Activated CD8-positive, alpha-beta memory T cell treated with anti-CD3 and anti-CD28 coated beads, Interleukin-2, amount 10 ng/mL, durations not matched to agents 7 days and 5 days (primary cell): ENCODE measurements at regions of chr20 and their contacts with region 1.

Region 1: DNA sequence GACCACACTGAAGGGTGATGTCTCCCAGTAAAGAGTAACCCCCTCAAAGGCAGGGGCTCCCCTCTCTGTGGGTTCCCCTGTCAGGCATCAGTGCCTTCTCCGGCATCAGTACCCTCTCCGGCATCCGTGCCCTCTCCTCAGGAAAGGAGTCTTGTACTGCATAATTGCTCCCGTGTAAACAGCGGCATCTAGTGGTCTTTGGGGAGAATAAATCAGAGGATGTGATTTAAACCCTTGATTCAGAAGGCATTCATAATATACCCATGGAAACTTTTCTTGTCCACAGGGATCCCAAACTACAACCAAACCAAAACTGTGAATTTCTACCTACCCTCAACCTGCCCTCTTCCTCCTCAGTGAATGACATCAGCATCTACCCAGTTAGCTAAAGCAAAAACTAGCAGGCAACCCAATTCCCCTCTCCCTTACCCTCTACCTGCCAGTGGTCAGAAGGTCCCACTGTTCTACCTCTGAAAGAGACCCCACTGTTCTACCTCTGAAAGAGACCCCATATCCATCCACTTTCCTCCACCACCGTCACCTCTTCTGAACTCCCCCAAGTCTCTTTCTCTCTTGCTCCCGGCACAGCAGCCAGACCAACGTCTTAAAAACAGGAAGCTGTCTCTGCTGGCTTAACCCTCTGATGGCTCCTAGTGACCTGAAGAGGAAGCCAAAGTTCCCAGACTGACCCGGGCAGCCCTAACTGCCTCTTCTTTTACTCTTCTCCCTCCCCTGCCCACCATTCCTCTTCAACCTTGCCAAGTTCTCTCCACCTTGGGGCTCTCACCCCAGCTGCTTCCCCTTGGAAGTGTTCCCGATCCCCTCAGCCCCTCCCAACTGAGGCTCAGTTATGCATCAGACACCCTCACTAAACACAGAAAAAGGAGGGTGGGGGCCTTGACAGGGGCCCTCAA is 27.2 kb downstream of the UBE2V1 start:
- DNase-seq: peak; percentile 54
- ATAC-seq: peak; percentile 79
- H3K4me3 Mint-ChIP-seq: peak overlapping the region; percentile 11
- H3K27ac Mint-ChIP-seq: peak overlapping the region; percentile 81
- H3K4me1 Mint-ChIP-seq: peaks cover 26% of the 10 kb centered on the region
- H3K27me3 Mint-ChIP-seq: no peaks in the 10 kb centered on the region

Region 2: DNA sequence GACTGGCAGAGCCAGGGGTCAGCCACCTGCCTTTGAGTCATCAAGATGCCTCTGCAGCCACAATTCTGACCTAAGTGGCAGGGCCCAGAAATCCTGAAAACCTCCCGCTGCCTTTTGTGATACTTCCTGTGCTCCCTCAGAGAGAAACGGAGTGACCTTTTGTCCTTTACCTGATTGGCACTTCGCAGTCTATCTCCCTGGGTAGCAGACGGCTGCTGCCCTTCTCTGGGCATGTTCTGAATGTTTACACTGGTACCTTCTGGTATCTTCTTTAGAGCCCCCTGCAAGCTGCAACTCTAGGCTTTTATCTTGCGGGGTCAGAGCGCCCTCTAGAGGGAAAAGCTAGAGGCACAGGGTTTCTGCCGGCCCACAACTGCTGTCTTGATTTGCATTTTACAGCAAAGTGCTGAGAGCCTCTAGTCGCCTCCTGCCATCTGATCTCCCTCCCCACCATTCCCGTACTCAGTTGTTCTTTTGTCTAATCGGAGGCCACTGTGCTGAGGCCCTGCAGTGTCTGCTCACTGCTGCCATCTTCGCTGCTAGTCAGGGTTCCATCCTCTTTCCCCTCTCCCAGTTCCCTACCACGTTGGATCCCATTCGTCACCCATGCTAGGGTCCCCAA is 197.3 kb before region 1 on chr20:
- CTCF ChIA-PET with region 1: no interaction called
- DNase-seq: peak; percentile 73
- ATAC-seq: peak; percentile 48
- H3K4me3 Mint-ChIP-seq: no peak overlapping the region
- H3K27ac Mint-ChIP-seq: peak overlapping the region; percentile 29
- H3K4me1 Mint-ChIP-seq: peaks cover 40% of the 10 kb centered on the region
- H3K27me3 Mint-ChIP-seq: no peaks in the 10 kb centered on the region

Region 3: DNA sequence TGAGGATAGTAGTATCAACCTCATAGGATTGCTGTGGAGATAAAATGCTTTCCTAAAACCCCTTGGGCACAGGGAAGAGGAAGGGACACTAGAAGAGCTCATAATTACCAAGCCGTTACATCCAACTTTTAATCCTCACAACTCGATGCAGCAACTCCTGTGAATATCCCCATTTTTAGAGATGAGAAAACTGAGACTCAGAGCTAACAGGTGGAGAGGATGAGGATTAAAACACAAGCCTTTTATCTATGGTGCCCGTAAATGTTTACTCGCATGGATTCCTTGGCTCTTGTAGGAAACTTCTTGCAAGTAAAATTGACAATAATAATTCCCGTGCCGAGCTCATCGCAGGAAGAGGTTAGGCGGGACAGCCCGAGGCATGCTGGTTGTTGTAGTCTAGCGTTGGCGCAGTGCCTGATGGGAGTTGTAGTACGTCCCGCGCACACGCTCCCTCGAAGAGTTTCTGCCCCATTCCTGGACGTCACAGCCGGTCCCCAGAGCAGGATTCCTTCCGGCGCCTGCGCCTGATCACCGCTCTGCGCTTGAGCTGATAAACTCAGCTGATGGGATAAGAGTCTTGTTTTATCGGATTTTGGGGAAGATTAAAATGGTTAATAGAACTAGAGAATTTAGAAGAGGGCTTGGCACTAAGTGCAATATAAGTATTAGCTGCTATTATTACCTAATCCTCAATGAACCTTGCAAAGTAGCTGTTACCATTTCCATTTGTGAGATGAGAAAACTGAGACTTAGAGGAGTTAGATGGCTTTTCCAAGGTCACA is 30.1 kb after region 1 on chr20:
- CTCF ChIA-PET with region 1: interaction called, 13 read pairs
- DNase-seq: peak; percentile 95
- ATAC-seq: peak; percentile 77
- H3K4me3 Mint-ChIP-seq: peak overlapping the region; percentile 82
- H3K27ac Mint-ChIP-seq: peak overlapping the region; percentile 86
- H3K4me1 Mint-ChIP-seq: peaks cover 44% of the 10 kb centered on the region
- H3K27me3 Mint-ChIP-seq: no peaks in the 10 kb centered on the region

Region 4: DNA sequence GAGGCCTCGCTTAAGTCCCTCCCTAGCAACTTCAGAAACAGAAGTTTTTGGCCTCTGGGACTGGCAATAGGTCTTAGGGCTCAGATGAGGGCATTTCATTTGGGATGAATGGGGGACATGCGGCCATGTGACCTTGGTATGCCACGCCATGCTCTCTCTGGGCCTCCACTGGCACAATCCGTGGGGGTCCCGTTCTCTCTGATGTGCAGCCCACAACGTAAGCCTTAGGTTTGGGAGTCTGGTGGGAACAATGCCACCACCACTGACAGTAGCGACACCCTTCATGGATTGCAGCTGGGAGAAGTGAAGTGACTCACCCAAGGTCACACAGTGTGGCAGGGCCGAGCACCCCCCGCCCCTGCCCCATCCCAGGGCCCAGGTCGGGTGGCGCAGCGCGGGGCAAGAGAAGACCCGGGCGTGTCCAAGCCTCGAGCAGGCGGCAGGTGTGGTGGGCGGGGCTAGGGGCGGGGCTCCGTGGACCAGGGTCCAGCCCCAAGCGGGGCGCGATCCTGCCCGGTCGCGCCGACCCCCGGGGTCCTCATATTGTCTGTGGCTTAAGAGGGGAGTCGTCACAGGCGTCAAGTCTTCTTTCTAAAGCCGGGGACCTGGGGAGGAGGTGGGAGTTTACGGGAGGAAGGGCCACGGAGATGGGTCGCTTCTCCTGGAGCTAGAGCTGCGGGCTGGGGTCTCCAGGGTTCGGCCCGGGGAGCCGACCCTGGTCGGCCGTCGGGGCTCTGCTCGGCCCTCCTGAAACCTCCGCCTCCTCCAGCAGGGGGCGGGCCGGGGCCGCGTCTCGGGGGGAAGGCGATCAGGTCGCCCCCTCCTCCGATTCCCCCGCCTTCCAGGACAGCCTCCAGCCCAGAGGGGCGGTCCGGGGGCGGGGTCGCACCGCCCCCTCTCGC is 104.2 kb after region 1 on chr20:
- CTCF ChIA-PET with region 1: no interaction called
- DNase-seq: peak; percentile 90
- ATAC-seq: peak; percentile 59
- H3K4me3 Mint-ChIP-seq: peak overlapping the region; percentile 20
- H3K27ac Mint-ChIP-seq: peak overlapping the region; percentile 36
- H3K4me1 Mint-ChIP-seq: peaks cover 20% of the 10 kb centered on the region
- H3K27me3 Mint-ChIP-seq: peaks cover 11% of the 10 kb centered on the region

Region 5: GRCh38 chr20:50278674-50279531 is 193.2 kb after region 1 on chr20:
- CTCF ChIA-PET with region 1: no interaction called
- DNase-seq: no peak
- ATAC-seq: no peak
- H3K4me3 Mint-ChIP-seq: no peak overlapping the region
- H3K27ac Mint-ChIP-seq: no peak overlapping the region
- H3K4me1 Mint-ChIP-seq: peaks cover 10% of the 10 kb centered on the region
- H3K27me3 Mint-ChIP-seq: peaks cover 9% of the 10 kb centered on the region